ENCODE measurements at regions of chr10 and their contacts with region 1.

Region 1: DNA sequence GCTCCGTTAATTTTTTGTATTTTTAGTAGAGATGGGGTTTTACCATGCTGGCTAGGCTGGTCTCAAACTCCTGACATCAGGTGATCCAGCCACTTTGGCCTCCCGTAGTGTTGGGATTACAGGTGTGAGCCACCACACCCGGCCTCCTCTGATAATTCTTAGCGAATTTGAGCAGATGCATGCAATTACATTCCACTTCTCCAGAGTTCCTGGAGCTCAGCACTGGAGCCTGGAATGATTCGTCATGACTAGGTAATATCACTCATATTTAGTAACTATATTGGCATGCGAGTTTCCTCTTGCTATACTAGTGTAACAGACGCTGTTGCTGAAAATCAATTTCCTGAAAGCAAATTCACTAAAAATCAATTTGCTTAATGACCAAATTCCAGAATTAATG is 86.8 kb downstream of the MKX start:
- DNase-seq: no peak
- H3K4me3 ChIP-seq: no peak overlapping the region
- H3K27ac ChIP-seq: no peak overlapping the region
- H3K4me1 ChIP-seq: no peaks in the 10 kb centered on the region
- H3K27me3 ChIP-seq: peaks cover 13% of the 10 kb centered on the region
- CTCF ChIP-seq: no peak

Region 2: GRCh38 chr10:27558612-27559020 is 100.2 kb before region 1 on chr10:
- intact Hi-C with region 1: loop called (anchors 5 kb)
- DNase-seq: peak; percentile 21
- H3K4me3 ChIP-seq: no peak overlapping the region
- H3K27ac ChIP-seq: no peak overlapping the region
- H3K4me1 ChIP-seq: no peaks in the 10 kb centered on the region
- H3K27me3 ChIP-seq: no peaks in the 10 kb centered on the region
- CTCF ChIP-seq: peak; percentile 76

Measured in left ventricle myocardium inferior (tissue), 1 donor.